ENCODE measurements at regions of chr6 and their contacts with region 1.

Region 1: DNA sequence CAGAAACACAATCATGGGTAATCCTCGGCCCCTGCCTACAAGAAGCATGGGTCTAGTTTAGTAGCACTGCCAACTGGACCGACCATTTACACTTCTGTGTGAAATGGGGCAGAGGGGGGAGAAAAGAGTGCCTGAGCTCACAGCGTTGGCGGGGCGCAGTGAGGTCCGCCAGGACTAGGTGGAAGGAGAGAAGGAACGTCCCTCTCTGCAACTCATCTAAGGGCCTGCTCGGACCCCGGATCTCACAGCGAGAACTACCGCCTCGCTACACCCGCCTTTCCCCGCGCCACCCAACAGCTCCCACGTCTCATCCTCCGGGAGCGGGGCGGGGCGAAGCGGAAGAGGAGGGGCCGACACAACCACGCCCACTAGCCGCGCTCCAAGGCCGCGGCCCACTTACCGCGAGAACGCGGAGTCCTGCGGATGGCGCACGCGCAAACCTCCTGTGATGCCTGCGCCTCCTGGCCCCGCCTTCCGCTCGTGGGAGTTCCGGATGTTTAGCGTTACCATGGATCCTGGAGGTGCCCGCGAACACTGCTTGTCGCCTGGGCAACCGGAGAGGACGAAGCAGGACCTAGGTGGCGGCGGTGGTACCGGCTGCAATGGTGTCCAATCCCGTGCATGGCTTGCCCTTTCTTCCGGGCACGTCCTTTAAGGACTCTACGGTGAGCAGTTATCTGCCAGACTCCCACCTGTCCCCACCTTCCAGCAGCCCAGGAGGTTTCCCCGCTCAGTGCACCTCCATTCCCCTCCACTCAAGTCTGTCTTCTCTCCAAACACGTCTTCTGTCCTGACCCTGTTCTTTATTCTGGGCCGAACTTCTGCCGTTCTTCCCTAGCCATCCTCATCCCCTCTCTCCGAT is at the start of gene EFHC1:
- DNase-seq: peak; percentile 94
- ATAC-seq: peak; percentile 91
- H3K4me3 ChIP-seq: peak within 1 kb of the TSS; percentile 70 to 89
- H3K27ac ChIP-seq: peak within 1 kb of the TSS; percentile 61
- H3K4me1 ChIP-seq: peaks cover 22 to 67% of the 10 kb centered on the region in 2 experiments
- H3K27me3 ChIP-seq: no peaks in the 10 kb centered on the region
- CTCF ChIP-seq: no peak
- POLR2A ChIP-seq: peak; percentile 83
- RAD21 ChIP-seq: no peak
- total RNA-seq, gene EFHC1: 12.4 TPM

Region 2: DNA sequence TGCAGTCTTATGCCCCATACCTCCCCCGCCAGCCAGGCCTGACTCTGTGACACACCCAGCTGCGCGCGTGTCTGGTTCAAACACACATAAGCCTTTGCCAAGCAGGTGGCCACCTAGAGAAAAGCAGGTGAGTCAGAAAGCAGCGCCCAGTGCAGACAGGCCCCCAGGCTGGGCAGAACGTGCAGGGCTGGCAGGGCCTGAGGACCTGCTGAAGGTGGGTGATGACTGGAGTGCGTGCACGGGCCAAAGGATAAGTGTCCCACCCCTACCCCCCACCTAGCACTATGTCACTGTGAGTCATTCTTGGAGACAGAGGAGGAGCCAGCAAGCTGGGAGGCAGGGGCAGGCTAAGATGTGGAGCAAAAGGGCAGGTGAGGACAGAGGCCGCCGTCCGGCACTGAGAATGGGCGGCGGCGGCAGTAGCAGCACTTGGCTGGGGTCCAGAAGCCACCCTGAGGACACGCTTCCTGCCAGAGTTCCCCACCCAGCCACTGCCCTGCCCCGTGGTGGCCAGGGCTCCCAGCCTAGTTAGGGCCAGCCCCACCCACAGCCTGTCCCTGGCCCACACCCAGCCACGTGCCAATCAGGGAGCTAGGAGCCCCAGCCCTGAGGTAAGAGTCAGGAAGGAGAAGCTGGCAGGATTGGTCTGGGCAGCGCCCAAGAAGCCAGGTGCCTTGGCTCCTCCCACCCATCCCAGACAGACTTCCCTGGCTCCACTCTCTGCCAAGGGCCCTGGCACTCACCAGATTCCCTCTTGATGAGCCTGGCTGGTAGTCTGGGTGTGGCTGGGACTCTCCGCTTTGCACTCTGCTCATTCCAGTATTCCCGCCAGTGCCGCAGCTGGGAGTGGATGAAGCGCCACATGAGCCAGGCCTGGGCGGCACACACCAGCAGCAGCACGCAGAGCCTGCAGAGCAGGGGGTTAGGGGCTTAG is 84.1 kb after region 1 on chr6:
- CTCF ChIA-PET with region 1: interaction called, 6 read pairs
- POLR2A ChIA-PET with region 1: no interaction called
- RAD21 ChIA-PET with region 1: no interaction called
- intact Hi-C with region 1: loop called (anchors 1 kb)
- DNase-seq: peak; percentile 94
- ATAC-seq: peak; percentile 88
- H3K4me3 ChIP-seq: peak overlapping the region; percentile 13 to 35; a peak in 3 of 4 replicates
- H3K27ac ChIP-seq: peak overlapping the region; percentile 76
- H3K4me1 ChIP-seq: peaks cover 27 to 42% of the 10 kb centered on the region in 2 experiments
- H3K27me3 ChIP-seq: no peaks in the 10 kb centered on the region
- CTCF ChIP-seq: no peak
- POLR2A ChIP-seq: no peak
- RAD21 ChIP-seq: peak; percentile 37

Region 3: DNA sequence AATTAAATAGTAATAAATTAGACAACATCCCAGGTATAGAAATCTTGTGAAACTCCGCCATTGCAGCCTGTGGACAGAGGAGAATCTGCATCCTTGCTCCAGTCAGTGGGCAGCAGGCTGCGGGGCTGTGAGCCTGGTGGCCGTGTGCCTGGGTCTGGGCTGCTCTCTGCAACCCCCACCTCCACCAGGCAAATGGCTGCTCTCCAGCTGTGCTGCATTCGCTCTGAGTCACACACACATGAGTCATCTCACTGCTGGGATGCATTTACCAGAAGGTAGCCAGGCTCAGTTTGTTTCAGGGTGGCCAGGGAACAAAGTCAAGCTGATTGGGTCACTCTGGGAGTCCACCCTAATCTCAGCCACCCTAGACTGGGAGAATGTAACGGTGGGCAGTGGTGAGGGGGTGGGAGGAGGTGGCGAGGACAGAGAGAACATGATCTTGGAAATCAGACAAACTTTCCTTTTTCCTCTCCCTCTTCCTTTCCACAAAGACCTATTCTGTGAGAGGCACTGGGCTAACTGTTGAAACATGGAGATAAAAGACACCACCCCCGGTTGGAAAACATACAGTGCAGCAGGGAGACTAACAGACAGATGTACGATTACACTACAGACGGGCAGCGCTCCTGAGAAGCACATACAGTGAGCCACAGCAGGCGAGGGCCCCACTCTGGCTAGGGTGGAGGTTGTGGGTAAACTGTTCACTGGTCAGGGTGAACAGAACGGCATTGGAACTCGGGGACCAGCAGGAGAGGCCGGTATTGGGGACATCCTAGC is 97.7 kb after region 1 on chr6:
- CTCF ChIA-PET with region 1: no interaction called
- POLR2A ChIA-PET with region 1: no interaction called
- RAD21 ChIA-PET with region 1: no interaction called
- intact Hi-C with region 1: no loop called
- DNase-seq: peak; percentile 80
- ATAC-seq: peak; percentile 89
- H3K4me3 ChIP-seq: peak overlapping the region in 1 of 2 experiments; percentile 36; a peak in 3 of 4 replicates
- H3K27ac ChIP-seq: peak overlapping the region; percentile 73
- H3K4me1 ChIP-seq: peaks cover 55 to 73% of the 10 kb centered on the region in 2 experiments
- H3K27me3 ChIP-seq: no peaks in the 10 kb centered on the region
- CTCF ChIP-seq: no peak
- POLR2A ChIP-seq: no peak
- RAD21 ChIP-seq: peak; percentile 31; the same call in 1 of the 2 replicates

Region 4: DNA sequence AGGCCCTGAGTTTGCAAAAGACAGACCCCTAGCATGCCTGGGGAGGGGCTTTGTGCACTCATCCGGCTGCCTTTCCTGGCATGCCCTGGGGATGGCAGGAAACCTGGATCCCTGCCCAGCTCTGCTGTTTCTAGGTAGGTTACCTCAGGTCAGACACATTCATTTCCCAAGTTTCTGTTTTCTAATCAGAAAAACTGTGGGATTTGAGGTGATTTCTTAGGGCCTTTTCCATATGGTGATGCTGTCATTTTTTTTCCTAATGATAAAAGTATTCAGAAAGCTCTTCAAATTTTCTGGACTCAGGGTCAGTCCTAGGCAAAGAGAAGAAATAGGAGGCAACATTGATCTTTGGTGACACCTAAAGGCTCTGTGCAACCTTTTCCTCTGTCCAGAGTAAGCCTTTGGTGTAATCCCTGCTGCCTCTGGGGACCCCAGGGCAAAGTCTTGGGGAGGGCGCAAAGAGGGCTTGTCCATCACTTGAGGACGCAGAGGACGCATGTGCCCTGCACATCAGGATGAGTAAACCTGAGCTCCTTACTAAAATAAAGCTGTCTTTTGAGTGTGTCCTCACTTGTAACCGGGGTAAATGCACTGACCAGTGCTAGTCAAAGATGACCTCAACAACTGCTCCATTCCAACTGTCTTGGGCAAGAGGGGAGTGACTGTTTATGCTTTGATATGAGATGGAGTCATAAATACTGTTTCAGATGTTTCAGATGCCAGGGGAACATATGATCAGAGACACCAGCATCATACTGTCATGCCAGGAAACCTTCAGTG is 170.3 kb after region 1 on chr6:
- CTCF ChIA-PET with region 1: interaction called, 4 read pairs
- POLR2A ChIA-PET with region 1: no interaction called
- RAD21 ChIA-PET with region 1: no interaction called
- intact Hi-C with region 1: loop called (anchors 2 kb)
- DNase-seq: no peak
- ATAC-seq: peak; percentile 52; the same call in 1 of the 2 replicates
- H3K4me3 ChIP-seq: no peak overlapping the region
- H3K27ac ChIP-seq: no peak overlapping the region
- H3K4me1 ChIP-seq: peaks cover 2 to 13% of the 10 kb centered on the region in 2 experiments; a peak in 3 of 4 replicates
- H3K27me3 ChIP-seq: no peaks in the 10 kb centered on the region
- CTCF ChIP-seq: peak in 1 of 3 experiments; percentile 56; a peak in 1 of 6 replicates
- POLR2A ChIP-seq: no peak
- RAD21 ChIP-seq: peak; percentile 63

Region 5: GRCh38 chr6:52664186-52664990 is 244.3 kb after region 1 on chr6:
- CTCF ChIA-PET with region 1: interaction called, 20 read pairs
- POLR2A ChIA-PET with region 1: interaction called, 6 read pairs
- RAD21 ChIA-PET with region 1: no interaction called
- intact Hi-C with region 1: loop called (anchors 1 kb)
- DNase-seq: peak; percentile 93
- ATAC-seq: peak; percentile 99
- H3K4me3 ChIP-seq: peak overlapping the region; percentile 45 to 62
- H3K27ac ChIP-seq: peak overlapping the region; percentile 11; the same call in 1 of the 2 replicates
- H3K4me1 ChIP-seq: peaks cover 5 to 21% of the 10 kb centered on the region in 2 experiments; a peak in 3 of 4 replicates
- H3K27me3 ChIP-seq: no peaks in the 10 kb centered on the region
- CTCF ChIP-seq: no peak
- POLR2A ChIP-seq: no peak
- RAD21 ChIP-seq: no peak

Measured in HCT116 (cell line).